ENCODE measurements at regions of chr1 and their contacts with region 1.

Region 1: DNA sequence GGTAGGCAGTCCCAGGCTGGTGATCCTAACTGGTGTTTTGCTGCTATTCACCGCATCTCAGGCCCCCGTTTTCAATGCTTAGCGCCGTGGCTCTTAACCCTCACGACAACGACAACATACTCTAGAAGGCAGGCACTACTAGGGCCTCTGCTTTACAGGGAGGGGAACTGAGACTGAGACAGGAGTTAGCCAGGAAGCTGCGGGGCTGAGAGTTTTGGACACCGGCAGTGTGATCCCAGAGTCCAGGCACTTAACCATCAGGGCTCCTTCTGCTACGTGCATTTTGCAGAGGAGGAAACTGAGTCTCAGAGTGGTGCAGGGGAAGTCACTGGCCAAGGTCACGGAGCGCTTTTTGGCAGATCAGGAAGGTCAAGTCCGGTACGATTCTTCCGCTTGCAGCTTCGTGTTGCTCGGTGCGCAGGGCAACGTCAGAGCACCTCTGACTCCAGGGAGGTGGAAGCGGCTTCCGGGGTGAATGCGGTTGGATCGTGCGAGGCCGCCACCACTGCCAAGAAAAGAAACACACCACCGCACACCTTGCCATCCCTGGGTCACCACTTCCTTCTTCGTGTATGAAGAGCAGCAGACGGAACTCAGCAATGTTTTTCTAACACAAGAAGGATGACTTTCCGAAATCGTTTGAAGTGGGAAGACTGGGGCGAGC is 300.3 kb downstream of the RRAGC start:
- DNase-seq: peak; percentile 93
- H3K4me3 Mint-ChIP-seq: peak overlapping the region; percentile 64
- H3K27ac Mint-ChIP-seq: peak overlapping the region; percentile 81
- H3K4me1 Mint-ChIP-seq: peaks cover 68% of the 10 kb centered on the region
- H3K27me3 Mint-ChIP-seq: peaks cover 26% of the 10 kb centered on the region

Region 2: GRCh38 chr1:37423810-37424209 is 1135.5 kb before region 1 on chr1:
- CTCF ChIA-PET with region 1: no interaction called
- intact Hi-C with region 1: no loop called
- DNase-seq: no peak
- H3K4me3 Mint-ChIP-seq: no peak overlapping the region
- H3K27ac Mint-ChIP-seq: no peak overlapping the region
- H3K4me1 Mint-ChIP-seq: no peaks in the 10 kb centered on the region
- H3K27me3 Mint-ChIP-seq: peaks cover 13% of the 10 kb centered on the region

Region 3: GRCh38 chr1:38527373-38527966 is 31.8 kb before region 1 on chr1:
- CTCF ChIA-PET with region 1: no interaction called
- intact Hi-C with region 1: loop called (anchors 1 kb)
- DNase-seq: peak; percentile 86
- H3K4me3 Mint-ChIP-seq: no peak overlapping the region
- H3K27ac Mint-ChIP-seq: peak overlapping the region; percentile 43
- H3K4me1 Mint-ChIP-seq: peaks cover 21% of the 10 kb centered on the region
- H3K27me3 Mint-ChIP-seq: peaks cover 2% of the 10 kb centered on the region

Region 4: DNA sequence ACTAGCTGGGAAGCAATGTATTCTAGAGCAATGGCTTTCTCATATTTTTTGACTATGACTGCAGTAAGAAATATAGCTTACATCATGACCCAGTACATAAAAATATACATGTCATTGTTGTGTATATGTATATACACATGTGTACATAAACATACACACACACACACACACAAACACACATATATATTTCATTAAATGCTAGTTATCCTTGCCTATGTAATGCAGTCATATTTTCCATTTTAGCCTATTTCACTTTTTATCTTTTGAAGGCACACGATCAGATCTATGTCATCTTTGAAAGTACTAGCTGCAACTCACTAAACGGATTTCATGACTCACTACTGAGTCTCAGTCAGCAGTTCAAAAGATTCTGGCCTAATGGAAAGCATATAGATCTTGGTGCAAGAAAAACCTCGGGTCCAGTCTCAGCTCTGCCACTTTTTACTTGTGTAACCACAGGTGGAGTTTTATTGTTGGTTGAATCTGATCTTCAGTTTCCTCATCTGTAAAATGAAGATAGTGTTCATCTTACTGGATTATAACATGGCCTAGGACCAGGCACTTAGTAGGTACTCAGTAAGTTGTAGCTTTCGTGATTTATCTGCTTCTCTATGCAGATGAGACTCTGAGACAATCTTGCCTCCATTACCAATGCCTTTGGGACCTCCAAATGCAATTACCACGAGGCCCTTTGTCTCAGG is 25.4 kb before region 1 on chr1:
- CTCF ChIA-PET with region 1: interaction called, 3 read pairs
- intact Hi-C with region 1: loop called (anchors 1 kb)
- DNase-seq: peak; percentile 48
- H3K4me3 Mint-ChIP-seq: no peak overlapping the region
- H3K27ac Mint-ChIP-seq: peak overlapping the region; percentile 53
- H3K4me1 Mint-ChIP-seq: peaks cover 19% of the 10 kb centered on the region
- H3K27me3 Mint-ChIP-seq: peaks cover 2% of the 10 kb centered on the region